Mammary epithelial cell (primary cell): ENCODE measurements at regions of chr10 and their contacts with region 1.

Region 1: DNA sequence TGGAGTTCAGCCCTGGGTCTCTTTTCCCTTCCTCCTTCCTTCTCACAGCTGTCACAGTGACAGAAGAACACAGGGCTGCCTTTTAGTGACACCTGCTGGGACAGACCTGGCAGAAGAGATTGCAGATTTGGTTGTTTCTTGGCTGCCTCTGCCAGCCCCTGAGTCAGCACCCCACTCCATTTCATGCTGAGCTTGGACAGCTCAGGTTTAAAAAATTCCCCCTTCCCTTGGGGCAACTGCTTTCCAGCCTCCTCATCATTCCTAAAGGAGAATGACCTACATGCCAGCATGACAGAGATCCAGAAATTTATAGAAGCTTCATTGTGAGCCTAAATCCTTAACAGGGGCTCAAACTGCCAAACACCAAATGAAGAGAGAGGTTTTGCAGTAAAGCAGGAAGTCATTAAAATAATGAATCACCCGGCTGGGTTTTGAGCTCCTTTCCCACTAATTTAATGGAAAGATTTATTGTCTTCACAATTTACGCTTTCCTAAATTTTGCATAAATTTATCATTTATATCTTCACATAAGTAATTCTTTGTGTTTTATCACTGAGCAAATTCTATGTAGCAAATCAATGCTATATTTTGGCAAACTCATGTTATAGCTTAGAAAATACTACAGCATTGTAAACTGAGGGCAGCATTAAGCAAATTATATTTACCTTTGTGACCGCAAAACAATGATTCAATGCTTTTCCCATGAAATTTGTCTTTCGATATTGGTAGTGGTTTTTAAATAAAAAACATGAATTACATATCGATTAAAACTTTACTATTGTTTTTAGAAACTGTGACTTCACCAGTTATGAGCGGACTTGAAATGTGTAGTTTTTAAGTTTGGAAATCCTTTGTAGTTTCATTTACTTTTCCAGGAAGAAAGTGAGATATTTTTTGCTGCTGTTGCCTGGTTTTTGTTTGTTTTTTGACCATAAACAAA is 399.5 kb upstream of the ANKRD30A start:
- DNase-seq: peak; percentile 95
- H3K4me3 ChIP-seq: peak overlapping the region in 1 of 3 experiments; percentile 34
- H3K27ac ChIP-seq: peak overlapping the region; percentile 75
- H3K4me1 ChIP-seq: peaks cover 9% of the 10 kb centered on the region
- H3K27me3 ChIP-seq: no peaks in the 10 kb centered on the region
- CTCF ChIP-seq: peak; percentile 29 to 71

Region 2: GRCh38 chr10:35613597-35614226 is 1112.1 kb before region 1 on chr10:
- CTCF ChIA-PET with region 1: no interaction called
- dilution Hi-C with region 1: no loop called
- in situ Hi-C with region 1: no loop called
- intact Hi-C with region 1: loop called (anchors 1 kb)
- DNase-seq: no peak
- H3K4me3 ChIP-seq: no peak overlapping the region
- H3K27ac ChIP-seq: no peak overlapping the region
- H3K4me1 ChIP-seq: no peaks in the 10 kb centered on the region
- H3K27me3 ChIP-seq: no peaks in the 10 kb centered on the region
- CTCF ChIP-seq: peak; percentile 36 to 58

Region 3: GRCh38 chr10:35642027-35642792 is 1083.6 kb before region 1 on chr10 and contains the start of gene FZD8:
- CTCF ChIA-PET with region 1: interaction called, 6 read pairs
- dilution Hi-C with region 1: no loop called
- in situ Hi-C with region 1: no loop called
- intact Hi-C with region 1: loop called (anchors 1 kb)
- DNase-seq: peak; percentile 95
- H3K4me3 ChIP-seq: peak within 1 kb of the TSS; percentile 55 to 72 (median 63)
- H3K27ac ChIP-seq: peak within 1 kb of the TSS; percentile 24
- H3K4me1 ChIP-seq: peaks cover 33% of the 10 kb centered on the region
- H3K27me3 ChIP-seq: no peaks in the 10 kb centered on the region
- CTCF ChIP-seq: peak in 1 of 2 donors; percentile 0
- total RNA-seq, gene FZD8: 17.8 to 21.2 TPM

Region 4: DNA sequence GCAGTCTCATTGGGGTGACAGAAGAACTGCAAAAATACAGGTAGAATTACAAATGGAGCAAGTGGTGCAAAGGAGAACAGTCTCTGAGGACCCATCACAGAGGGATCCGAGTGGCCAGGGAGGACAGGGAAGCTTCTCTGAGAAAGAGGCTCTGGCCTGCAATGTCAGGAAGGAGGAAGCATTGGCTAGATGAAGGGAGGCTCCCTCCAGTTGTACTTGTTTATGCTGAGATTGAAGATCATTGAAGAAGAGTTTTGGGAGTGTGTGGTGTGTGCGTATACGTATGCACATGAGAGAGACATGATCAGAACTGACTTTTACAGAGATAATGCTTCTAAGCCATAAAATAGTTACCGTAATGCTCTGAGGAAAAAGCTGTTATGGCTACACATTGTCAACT is 809.1 kb before region 1 on chr10:
- CTCF ChIA-PET with region 1: no interaction called
- dilution Hi-C with region 1: no loop called
- in situ Hi-C with region 1: no loop called
- intact Hi-C with region 1: loop called (anchors 5 kb)
- DNase-seq: no peak
- H3K4me3 ChIP-seq: no peak overlapping the region
- H3K27ac ChIP-seq: no peak overlapping the region
- H3K4me1 ChIP-seq: peaks cover 19% of the 10 kb centered on the region
- H3K27me3 ChIP-seq: no peaks in the 10 kb centered on the region
- CTCF ChIP-seq: peak; percentile 7 to 52

Region 5: DNA sequence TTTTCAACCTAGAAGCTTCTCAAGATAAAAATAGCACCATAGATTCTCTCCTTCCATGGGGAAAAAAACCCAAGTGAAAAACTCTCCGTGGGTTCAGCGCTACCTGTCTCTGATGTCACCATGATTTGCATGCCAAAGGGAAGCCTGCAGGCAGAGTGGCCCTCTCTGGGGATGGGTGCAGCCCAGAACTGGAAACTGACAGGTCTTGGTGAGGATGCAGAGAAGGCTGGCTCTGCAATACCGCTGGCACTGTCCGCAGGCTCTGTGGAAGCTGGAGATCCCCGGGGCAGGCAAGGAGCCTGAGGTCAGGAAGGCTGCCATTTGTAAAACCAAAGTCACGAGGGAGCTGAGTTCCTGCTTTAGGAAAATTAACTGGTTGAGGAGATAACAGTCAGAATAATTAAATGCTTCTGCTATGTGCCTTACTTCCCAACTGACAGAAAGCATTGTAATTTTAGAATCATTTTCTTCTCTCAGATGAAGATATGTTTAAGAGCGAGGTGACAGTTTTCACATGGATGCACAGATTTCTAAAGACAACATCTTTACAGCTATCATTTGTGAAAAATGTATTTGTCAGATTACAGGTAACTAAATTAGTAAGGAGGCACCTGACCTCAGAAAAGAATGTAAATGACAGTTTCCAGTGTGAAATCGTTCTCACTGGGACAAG is 352.3 kb before region 1 on chr10:
- CTCF ChIA-PET with region 1: no interaction called
- dilution Hi-C with region 1: no loop called
- in situ Hi-C with region 1: no loop called
- intact Hi-C with region 1: no loop called
- DNase-seq: no peak
- H3K4me3 ChIP-seq: no peak overlapping the region
- H3K27ac ChIP-seq: no peak overlapping the region
- H3K4me1 ChIP-seq: no peaks in the 10 kb centered on the region
- H3K27me3 ChIP-seq: no peaks in the 10 kb centered on the region
- CTCF ChIP-seq: no peak

Region 6: GRCh38 chr10:36450380-36450779 is 275.5 kb before region 1 on chr10:
- CTCF ChIA-PET with region 1: no interaction called
- dilution Hi-C with region 1: no loop called
- in situ Hi-C with region 1: no loop called
- intact Hi-C with region 1: loop called (anchors 5 kb)
- DNase-seq: peak; percentile 19
- H3K4me3 ChIP-seq: no peak overlapping the region
- H3K27ac ChIP-seq: no peak overlapping the region
- H3K4me1 ChIP-seq: peaks cover 6% of the 10 kb centered on the region
- H3K27me3 ChIP-seq: no peaks in the 10 kb centered on the region
- CTCF ChIP-seq: no peak

Region 7: GRCh38 chr10:36779234-36779846 is 53.5 kb after region 1 on chr10:
- CTCF ChIA-PET with region 1: no interaction called
- dilution Hi-C with region 1: no loop called
- in situ Hi-C with region 1: no loop called
- intact Hi-C with region 1: loop called (anchors 1 kb)
- DNase-seq: peak; percentile 57
- H3K4me3 ChIP-seq: no peak overlapping the region
- H3K27ac ChIP-seq: no peak overlapping the region
- H3K4me1 ChIP-seq: no peaks in the 10 kb centered on the region
- H3K27me3 ChIP-seq: no peaks in the 10 kb centered on the region
- CTCF ChIP-seq: peak; percentile 71 to 76